ENCODE measurements at regions of chr7 and their contacts with region 1.

Region 1: DNA sequence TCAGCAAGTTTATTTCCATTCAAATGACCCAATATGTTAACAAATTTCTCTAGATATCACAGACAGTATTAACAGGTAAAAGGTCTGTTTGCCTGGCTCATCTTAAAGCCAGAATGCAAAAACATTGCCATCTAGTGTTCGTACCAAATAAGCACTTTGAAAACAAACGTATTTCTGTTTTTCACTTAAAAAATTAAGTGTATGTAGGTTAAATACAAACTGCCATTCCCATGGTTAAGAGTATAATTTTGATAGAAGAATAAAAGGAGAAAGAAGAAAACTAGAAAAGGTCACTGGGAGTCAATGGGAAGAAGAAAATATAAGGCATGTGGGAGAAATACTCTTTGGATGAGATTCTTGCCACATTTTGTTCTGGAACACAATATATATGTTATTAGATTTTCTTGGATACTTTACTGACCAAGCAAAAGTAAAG is 51.0 kb downstream of the ORC5 start:
- DNase-seq: no peak
- H3K4me3 Mint-ChIP-seq: no peak overlapping the region
- H3K27ac Mint-ChIP-seq: no peak overlapping the region
- H3K4me1 Mint-ChIP-seq: no peaks in the 10 kb centered on the region
- H3K27me3 Mint-ChIP-seq: no peaks in the 10 kb centered on the region

Region 2: DNA sequence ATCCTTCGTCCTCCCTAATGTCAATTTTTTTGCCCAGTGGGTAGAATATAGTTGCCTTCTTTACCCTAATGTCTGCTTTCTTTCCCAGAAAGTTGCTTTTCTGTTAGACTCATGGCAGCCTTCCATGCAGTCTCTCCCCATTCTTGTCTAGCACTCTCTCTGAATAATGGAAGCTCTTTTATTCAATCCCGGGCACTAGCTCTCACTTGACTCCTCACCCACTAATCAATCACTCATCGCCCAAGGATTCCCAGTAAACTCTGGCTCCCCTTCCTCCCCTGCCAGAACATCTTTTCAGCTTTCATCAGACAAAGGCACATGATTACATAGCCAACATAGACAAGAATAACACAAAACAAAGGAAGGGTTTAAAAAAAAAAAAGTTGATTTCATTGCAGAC is 67.2 kb before region 1 on chr7:
- CTCF ChIA-PET with region 1: no interaction called
- POLR2A ChIA-PET with region 1: no interaction called
- intact Hi-C with region 1: no loop called
- DNase-seq: no peak
- H3K4me3 Mint-ChIP-seq: no peak overlapping the region
- H3K27ac Mint-ChIP-seq: no peak overlapping the region
- H3K4me1 Mint-ChIP-seq: no peaks in the 10 kb centered on the region
- H3K27me3 Mint-ChIP-seq: peaks cover 12% of the 10 kb centered on the region

Region 3: GRCh38 chr7:104106108-104106905 is 50.6 kb before region 1 on chr7:
- CTCF ChIA-PET with region 1: interaction called, 5 read pairs
- POLR2A ChIA-PET with region 1: no interaction called
- intact Hi-C with region 1: loop called (anchors 5 kb)
- DNase-seq: no peak
- H3K4me3 Mint-ChIP-seq: no peak overlapping the region
- H3K27ac Mint-ChIP-seq: no peak overlapping the region
- H3K4me1 Mint-ChIP-seq: no peaks in the 10 kb centered on the region
- H3K27me3 Mint-ChIP-seq: peaks cover 3% of the 10 kb centered on the region